Psoas muscle (tissue), 8 donors: ENCODE measurements at regions of chr13 and their contacts with region 1.

Region 1: GRCh38 chr13:48303359-48304142 is at the start of gene RB1:
- DNase-seq: peak; percentile 96 to 97
- ATAC-seq: peak; percentile 94 to 96 (median 94)
- H3K4me3 ChIP-seq: peak within 1 kb of the TSS; percentile 97
- H3K27ac ChIP-seq: peak within 1 kb of the TSS; percentile 100
- H3K4me1 ChIP-seq: peaks cover 14% of the 10 kb centered on the region
- H3K27me3 ChIP-seq: no peaks in the 10 kb centered on the region
- CTCF ChIP-seq: no peak
- total RNA-seq, gene RB1: 23.7 to 35.6 (median 30.7) TPM

Region 2: DNA sequence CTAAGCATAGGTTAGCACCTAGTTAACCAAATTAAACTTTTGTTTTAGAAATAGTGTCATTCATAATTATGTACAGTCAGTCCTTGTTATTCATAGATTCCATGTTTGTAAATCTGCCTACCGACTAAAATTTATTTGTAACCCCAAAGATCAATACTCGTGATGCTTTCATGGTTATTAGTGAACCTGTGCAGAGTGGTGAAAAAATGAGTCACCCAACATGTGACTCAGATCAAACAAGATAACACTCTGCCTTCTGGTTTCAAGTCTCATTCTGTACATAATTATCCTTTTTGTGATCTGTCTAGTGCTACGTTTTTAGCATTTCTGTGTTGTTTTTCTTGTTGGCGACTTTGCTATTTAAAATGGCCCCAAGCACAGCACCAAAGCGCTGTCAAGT is 577.2 kb before region 1 on chr13:
- intact Hi-C with region 1: no loop called
- DNase-seq: no peak
- ATAC-seq: no peak
- H3K4me3 ChIP-seq: no peak overlapping the region
- H3K27ac ChIP-seq: no peak overlapping the region
- H3K4me1 ChIP-seq: no peaks in the 10 kb centered on the region
- H3K27me3 ChIP-seq: no peaks in the 10 kb centered on the region
- CTCF ChIP-seq: no peak

Region 3: DNA sequence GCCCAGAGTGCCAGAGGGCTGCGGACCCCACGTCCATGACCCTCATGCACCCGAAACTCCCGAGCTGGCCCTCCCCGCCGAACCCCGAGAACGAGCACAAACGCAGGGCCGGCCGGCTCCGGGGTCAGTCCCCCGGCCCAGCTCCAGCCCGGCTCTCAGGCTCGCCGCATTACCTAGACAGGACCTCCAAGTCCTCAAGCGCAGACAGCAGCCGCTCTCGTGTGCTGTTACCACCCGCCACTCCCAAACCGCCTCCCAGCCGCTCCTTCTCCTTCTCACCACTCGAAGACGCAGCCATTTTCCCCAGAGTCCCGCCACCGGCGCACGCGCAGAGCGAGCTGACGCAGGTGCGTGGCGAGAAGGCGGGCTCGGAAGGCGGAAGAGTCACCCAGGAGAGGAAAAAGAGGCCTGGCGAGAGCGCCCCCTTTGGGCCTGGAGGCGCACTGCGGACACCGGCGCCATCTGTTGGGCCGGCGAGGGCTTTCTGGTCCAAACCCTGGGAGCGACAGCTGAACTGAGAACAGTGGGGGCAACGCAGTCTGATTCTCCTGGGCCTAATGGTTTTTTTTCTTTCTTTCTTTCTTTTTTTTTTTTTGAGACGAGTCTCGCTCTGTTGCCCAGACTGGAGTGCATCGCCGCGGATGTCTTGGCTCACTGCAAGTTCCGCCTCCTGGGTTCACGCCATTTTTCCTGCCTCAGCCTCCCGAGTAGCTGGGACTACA is 208.6 kb before region 1 on chr13 and contains the start of gene MED4:
- intact Hi-C with region 1: loop called in 1 of 2 experiments (anchors 10 kb)
- DNase-seq: peak; percentile 96 to 98
- ATAC-seq: peak; percentile 99 to 100 (median 99)
- H3K4me3 ChIP-seq: peak within 1 kb of the TSS; percentile 85
- H3K27ac ChIP-seq: peak within 1 kb of the TSS; percentile 89
- H3K4me1 ChIP-seq: peaks cover 43% of the 10 kb centered on the region
- H3K27me3 ChIP-seq: no peaks in the 10 kb centered on the region
- CTCF ChIP-seq: peak; percentile 100
- total RNA-seq, gene MED4: 41.3 to 58.6 (median 44.9) TPM

Region 4: DNA sequence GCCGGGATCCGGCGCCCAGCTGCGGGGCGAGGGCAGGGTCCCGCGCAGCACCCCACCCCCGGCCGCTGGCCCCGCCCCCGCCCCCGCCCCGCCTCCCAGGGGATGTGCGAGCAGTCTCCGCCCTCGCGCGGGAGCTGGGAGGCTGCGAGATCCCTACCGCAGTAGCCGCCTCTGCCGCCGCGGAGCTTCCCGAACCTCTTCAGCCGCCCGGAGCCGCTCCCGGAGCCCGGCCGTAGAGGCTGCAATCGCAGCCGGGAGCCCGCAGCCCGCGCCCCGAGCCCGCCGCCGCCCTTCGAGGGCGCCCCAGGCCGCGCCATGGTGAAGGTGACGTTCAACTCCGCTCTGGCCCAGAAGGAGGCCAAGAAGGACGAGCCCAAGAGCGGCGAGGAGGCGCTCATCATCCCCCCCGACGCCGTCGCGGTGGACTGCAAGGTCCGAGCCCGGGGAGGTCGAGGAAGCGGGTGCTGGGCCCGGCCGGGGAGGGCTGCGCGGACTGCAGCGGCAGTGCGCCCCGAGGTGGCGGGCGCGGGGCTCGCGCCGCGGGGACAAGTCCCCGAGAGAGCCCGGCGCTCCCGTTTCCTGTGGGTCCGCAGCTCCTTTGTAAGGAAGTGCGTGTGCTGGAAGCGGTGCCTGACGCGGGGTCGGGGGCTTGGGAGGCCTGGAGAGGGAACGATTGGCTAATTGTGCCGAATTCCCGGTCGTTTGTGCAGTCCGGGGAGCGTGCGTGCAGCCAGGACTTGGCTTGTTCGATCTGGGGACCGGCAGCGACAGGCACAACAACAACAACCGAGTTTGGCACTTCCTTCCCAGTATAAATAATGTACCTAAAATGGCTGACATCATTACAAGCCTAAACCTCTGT is 70.3 kb before region 1 on chr13 and contains the start of gene ITM2B:
- intact Hi-C with region 1: loop called (anchors 5 kb)
- DNase-seq: peak; percentile 78 to 88
- ATAC-seq: peak; percentile 80 to 87 (median 82)
- H3K4me3 ChIP-seq: peak within 1 kb of the TSS; percentile 97
- H3K27ac ChIP-seq: peak within 1 kb of the TSS; percentile 99
- H3K4me1 ChIP-seq: peaks cover 30% of the 10 kb centered on the region
- H3K27me3 ChIP-seq: no peaks in the 10 kb centered on the region
- CTCF ChIP-seq: peak; percentile 52
- total RNA-seq, gene ITM2B: 122 to 219 (median 171) TPM